PC-3 (cell line): ENCODE measurements at regions of chr16 and their contacts with region 1.

Region 1: GRCh38 chr16:15482068-15482747 is 47.8 kb downstream of the BMERB1 start:
- DNase-seq: peak; percentile 94
- ATAC-seq: peak; percentile 100
- H3K4me3 ChIP-seq: no peak overlapping the region
- H3K27ac ChIP-seq: peak overlapping the region; percentile 66
- H3K4me1 ChIP-seq: peaks cover 10% of the 10 kb centered on the region
- H3K27me3 ChIP-seq: no peaks in the 10 kb centered on the region
- CTCF ChIP-seq: peak; percentile 36; the same call in 1 of the 2 replicates

Region 2: GRCh38 chr16:15502041-15502725 is 20.0 kb after region 1 on chr16:
- CTCF ChIA-PET with region 1: no interaction called
- POLR2A ChIA-PET with region 1: no interaction called
- intact Hi-C with region 1: no loop called
- DNase-seq: peak; percentile 77
- ATAC-seq: peak; percentile 93
- H3K4me3 ChIP-seq: no peak overlapping the region
- H3K27ac ChIP-seq: peak overlapping the region; percentile 49
- H3K4me1 ChIP-seq: peaks cover 9% of the 10 kb centered on the region
- H3K27me3 ChIP-seq: no peaks in the 10 kb centered on the region
- CTCF ChIP-seq: no peak

Region 3: GRCh38 chr16:15553313-15554088 is 71.3 kb after region 1 on chr16:
- CTCF ChIA-PET with region 1: no interaction called
- POLR2A ChIA-PET with region 1: no interaction called
- intact Hi-C with region 1: loop called (anchors 10 kb)
- DNase-seq: no peak
- ATAC-seq: no peak
- H3K4me3 ChIP-seq: no peak overlapping the region
- H3K27ac ChIP-seq: no peak overlapping the region
- H3K4me1 ChIP-seq: no peaks in the 10 kb centered on the region
- H3K27me3 ChIP-seq: no peaks in the 10 kb centered on the region
- CTCF ChIP-seq: no peak